Naive thymus-derived CD4-positive, alpha-beta T cell (primary cell): ENCODE measurements at regions of chr1 and their contacts with region 1.

Region 1: GRCh38 chr1:230978491-230979388 is at the starts of genes ARV1 and TTC13:
- DNase-seq: peak; percentile 83 to 98 (median 93)
- ATAC-seq: peak; percentile 97
- H3K4me3 ChIP-seq: peak within 1 kb of the TSS; percentile 71
- H3K4me3 Mint-ChIP-seq: peak within 1 kb of the TSS in 9 of 10 donors; percentile 83 to 100 (median 98)
- H3K27ac ChIP-seq: peak within 1 kb of the TSS; percentile 82
- H3K27ac Mint-ChIP-seq: peak within 1 kb of the TSS; percentile 92 to 99 (median 96)
- H3K4me1 ChIP-seq: peaks cover 34 to 39% of the 10 kb centered on the region in 2 donors
- H3K4me1 Mint-ChIP-seq: peaks cover 34 to 52% (median 43%) of the 10 kb centered on the region in 7 donors
- H3K27me3 ChIP-seq: no peaks in the 10 kb centered on the region
- H3K27me3 Mint-ChIP-seq: no peaks in the 10 kb centered on the region
- total RNA-seq, gene ARV1: 5.6 to 15.2 (median 11.5) TPM
- total RNA-seq, gene TTC13: 31.8 to 54.6 (median 45.1) TPM

Region 2: GRCh38 chr1:230426246-230427093 is 552.3 kb before region 1 on chr1 and contains the start of gene PGBD5:
- CTCF ChIA-PET with region 1: no interaction called
- POLR2A ChIA-PET with region 1: no interaction called
- intact Hi-C with region 1: loop called in 1 of 2 experiments (anchors 10 kb)
- DNase-seq: peak; percentile 5 to 79 (median 44)
- ATAC-seq: peak; percentile 84
- H3K4me3 ChIP-seq: no peak within 1 kb of the TSS
- H3K4me3 Mint-ChIP-seq: peak within 1 kb of the TSS; percentile 65 to 88 (median 77)
- H3K27ac ChIP-seq: no peak within 1 kb of the TSS
- H3K27ac Mint-ChIP-seq: peak within 1 kb of the TSS in 1 of 9 donors; percentile 3
- H3K4me1 ChIP-seq: peaks cover 0 to 3% of the 10 kb centered on the region in 2 donors
- H3K4me1 Mint-ChIP-seq: peaks cover 6 to 26% (median 14%) of the 10 kb centered on the region in 7 donors
- H3K27me3 ChIP-seq: peaks cover 0 to 9% of the 10 kb centered on the region in 2 donors
- H3K27me3 Mint-ChIP-seq: peaks cover 53 to 65% (median 63%) of the 10 kb centered on the region in 5 donors
- total RNA-seq, gene PGBD5: 0.36 TPM in 1 of 5 experiments, not detected in the others

Region 3: DNA sequence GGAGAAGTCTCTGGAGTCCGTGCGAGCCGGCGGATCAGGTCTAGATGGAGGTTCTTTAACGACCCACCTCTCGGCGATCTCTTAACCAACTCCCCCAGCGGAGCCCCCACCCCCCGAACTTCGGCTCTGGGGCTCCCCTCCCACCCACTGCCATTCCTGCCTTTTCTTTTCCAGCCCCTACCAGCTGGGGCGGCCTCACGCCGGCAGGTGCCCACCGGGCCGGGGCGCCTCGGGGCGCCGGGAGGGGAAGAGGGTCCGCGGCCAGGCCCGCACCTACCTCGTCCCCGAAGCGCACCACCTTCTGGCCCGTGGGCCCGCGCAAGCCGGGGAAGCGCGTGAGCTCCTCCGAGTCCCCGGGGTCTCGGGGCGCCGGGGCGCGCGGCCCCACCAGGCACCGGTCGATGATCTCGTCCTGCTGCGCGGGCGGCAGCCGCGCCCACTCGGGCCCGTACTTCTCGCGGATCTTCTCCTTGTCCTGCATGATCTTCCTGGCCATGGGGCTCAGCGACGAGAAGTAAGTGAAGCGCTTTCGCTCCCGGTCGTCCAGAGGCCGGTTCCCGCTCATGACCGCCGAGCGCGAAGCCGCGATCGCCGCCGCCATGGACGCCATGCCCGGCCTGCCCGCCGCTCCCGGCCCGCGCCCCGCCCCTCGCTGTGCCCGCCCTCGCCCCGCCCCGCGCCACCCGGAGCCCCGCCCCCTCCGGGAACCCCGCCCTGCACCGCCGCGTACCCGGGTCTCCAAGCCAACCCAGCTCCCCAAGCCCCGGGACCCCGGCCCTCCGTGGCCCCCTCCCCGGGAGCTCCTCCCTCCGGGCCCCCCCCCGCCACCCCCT is 110.6 kb before region 1 on chr1 and contains the start of gene C1orf198:
- CTCF ChIA-PET with region 1: interaction called, 3 read pairs
- POLR2A ChIA-PET with region 1: no interaction called
- intact Hi-C with region 1: loop called (anchors 1 to 2 kb)
- DNase-seq: peak; percentile 48 to 84 (median 69)
- ATAC-seq: peak; percentile 97
- H3K4me3 ChIP-seq: peak within 1 kb of the TSS; percentile 76
- H3K4me3 Mint-ChIP-seq: peak within 1 kb of the TSS; percentile 70 to 94 (median 88)
- H3K27ac ChIP-seq: peak within 1 kb of the TSS; percentile 67
- H3K27ac Mint-ChIP-seq: peak within 1 kb of the TSS in 8 of 9 donors; percentile 29 to 84 (median 62)
- H3K4me1 ChIP-seq: peaks cover 0 to 5% of the 10 kb centered on the region in 2 donors
- H3K4me1 Mint-ChIP-seq: peaks cover 10 to 33% (median 24%) of the 10 kb centered on the region in 7 donors
- H3K27me3 ChIP-seq: peaks cover 0 to 7% of the 10 kb centered on the region in 2 donors
- H3K27me3 Mint-ChIP-seq: peaks cover 13 to 38% (median 25%) of the 10 kb centered on the region in 5 donors
- total RNA-seq, gene C1orf198: 2.9 to 6.0 (median 3.7) TPM

Region 4: GRCh38 chr1:230937371-230937770 is 41.4 kb before region 1 on chr1:
- CTCF ChIA-PET with region 1: interaction called, 3 read pairs
- POLR2A ChIA-PET with region 1: no interaction called
- intact Hi-C with region 1: loop called in 1 of 2 experiments (anchors 5 kb)
- DNase-seq: no peak
- ATAC-seq: no peak
- H3K4me3 ChIP-seq: no peak overlapping the region
- H3K4me3 Mint-ChIP-seq: no peak overlapping the region
- H3K27ac ChIP-seq: no peak overlapping the region
- H3K27ac Mint-ChIP-seq: peak overlapping the region in 2 of 9 donors; percentile 41 to 56
- H3K4me1 ChIP-seq: no peaks in the 10 kb centered on the region
- H3K4me1 Mint-ChIP-seq: peaks cover 0 to 22% (median 7%) of the 10 kb centered on the region in 7 donors
- H3K27me3 ChIP-seq: no peaks in the 10 kb centered on the region
- H3K27me3 Mint-ChIP-seq: no peaks in the 10 kb centered on the region

Region 5: GRCh38 chr1:231240883-231241735 is 262.4 kb after region 1 on chr1 and contains the start of gene GNPAT:
- CTCF ChIA-PET with region 1: no interaction called
- POLR2A ChIA-PET with region 1: interaction called, 3 read pairs
- intact Hi-C with region 1: loop called (anchors 1 kb)
- DNase-seq: peak; percentile 86 to 97 (median 92)
- ATAC-seq: peak; percentile 98
- H3K4me3 ChIP-seq: peak within 1 kb of the TSS; percentile 98
- H3K4me3 Mint-ChIP-seq: peak within 1 kb of the TSS; percentile 90 to 99 (median 95)
- H3K27ac ChIP-seq: peak within 1 kb of the TSS; percentile 93
- H3K27ac Mint-ChIP-seq: peak within 1 kb of the TSS; percentile 92 to 99 (median 97)
- H3K4me1 ChIP-seq: peaks cover 17 to 44% of the 10 kb centered on the region in 2 donors
- H3K4me1 Mint-ChIP-seq: peaks cover 47 to 86% (median 76%) of the 10 kb centered on the region in 7 donors
- H3K27me3 ChIP-seq: no peaks in the 10 kb centered on the region
- H3K27me3 Mint-ChIP-seq: no peaks in the 10 kb centered on the region
- total RNA-seq, gene GNPAT: 17.3 to 41.0 (median 35.5) TPM

Region 6: GRCh38 chr1:231528172-231529029 is 549.7 kb after region 1 on chr1 and contains the start of gene TSNAX:
- CTCF ChIA-PET with region 1: no interaction called
- POLR2A ChIA-PET with region 1: interaction called, 3 read pairs
- intact Hi-C with region 1: loop called (anchors 1 kb)
- DNase-seq: peak; percentile 85 to 94 (median 92)
- ATAC-seq: peak; percentile 93
- H3K4me3 ChIP-seq: peak within 1 kb of the TSS; percentile 93
- H3K4me3 Mint-ChIP-seq: peak within 1 kb of the TSS; percentile 85 to 99 (median 97)
- H3K27ac ChIP-seq: peak within 1 kb of the TSS; percentile 86
- H3K27ac Mint-ChIP-seq: peak within 1 kb of the TSS; percentile 96 to 100 (median 99)
- H3K4me1 ChIP-seq: peaks cover 24 to 26% of the 10 kb centered on the region in 2 donors
- H3K4me1 Mint-ChIP-seq: peaks cover 23 to 55% (median 50%) of the 10 kb centered on the region in 7 donors
- H3K27me3 ChIP-seq: no peaks in the 10 kb centered on the region
- H3K27me3 Mint-ChIP-seq: no peaks in the 10 kb centered on the region
- total RNA-seq, gene TSNAX: 33.7 to 49.7 (median 34.3) TPM